Aorta (tissue), 5 donors: ENCODE measurements at regions of chr11 and their contacts with region 1.

Region 1: DNA sequence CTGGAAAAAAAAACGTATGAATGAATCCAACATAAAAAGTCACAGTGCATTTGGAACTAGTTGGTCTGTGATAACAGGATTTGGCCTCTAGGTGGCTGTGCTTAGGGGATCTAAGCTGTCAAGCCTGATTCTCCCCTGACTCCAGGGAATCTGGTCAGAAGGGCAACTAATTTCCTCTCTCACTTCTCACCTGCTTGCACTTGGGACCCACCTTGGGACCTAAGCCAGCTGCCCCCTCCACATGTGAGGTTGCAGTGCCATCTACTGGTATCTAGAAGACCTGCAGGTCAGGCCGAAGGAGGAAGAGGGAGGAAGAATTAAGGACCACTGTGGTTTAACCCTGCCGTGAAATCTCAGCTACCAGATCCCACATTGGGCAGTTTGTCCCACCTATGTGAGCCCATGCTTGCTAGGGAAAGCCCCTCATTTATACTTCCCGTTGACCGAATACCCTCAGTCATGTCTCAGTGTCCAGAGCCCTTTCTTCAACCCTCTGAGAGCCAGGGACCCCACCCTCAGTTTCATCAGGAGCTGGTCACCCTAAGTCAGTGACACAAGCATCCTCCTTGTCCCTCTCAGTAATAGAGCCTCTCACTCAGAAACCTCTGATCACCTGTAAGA is 33.2 kb upstream of the CAVIN3 start:
- DNase-seq: no peak
- ATAC-seq: peak; percentile 81
- H3K4me3 ChIP-seq: no peak overlapping the region
- H3K27ac ChIP-seq: no peak overlapping the region
- H3K4me1 ChIP-seq: no peaks in the 10 kb centered on the region
- H3K27me3 ChIP-seq: no peaks in the 10 kb centered on the region

Region 2: DNA sequence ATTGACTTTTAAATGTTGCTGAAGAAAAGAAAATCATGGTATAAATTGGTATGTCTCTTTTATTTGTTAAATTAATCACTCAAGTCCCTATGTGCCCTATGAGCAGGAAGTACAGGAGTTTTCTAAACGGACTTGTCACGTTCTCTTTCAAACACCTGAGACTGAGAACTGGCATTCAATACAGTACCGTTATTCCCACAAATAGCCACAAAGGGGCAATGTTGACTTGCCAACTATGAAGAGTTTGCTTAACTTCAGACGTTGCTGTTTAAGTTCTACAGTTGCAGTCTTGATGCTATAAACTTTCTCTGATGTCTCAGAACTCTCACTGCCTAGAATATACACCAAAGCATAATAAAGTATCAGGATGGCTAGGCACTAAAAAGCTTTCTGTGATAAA is 330.5 kb before region 1 on chr11:
- intact Hi-C with region 1: loop called in 1 of 2 experiments (anchors 10 kb)
- DNase-seq: no peak
- ATAC-seq: no peak
- H3K4me3 ChIP-seq: no peak overlapping the region
- H3K27ac ChIP-seq: no peak overlapping the region
- H3K4me1 ChIP-seq: no peaks in the 10 kb centered on the region
- H3K27me3 ChIP-seq: no peaks in the 10 kb centered on the region

Region 3: GRCh38 chr11:6251120-6251733 is 102.2 kb before region 1 on chr11:
- intact Hi-C with region 1: loop called (anchors 1 to 2 kb)
- DNase-seq: peak; percentile 72 to 84
- ATAC-seq: peak; percentile 94
- H3K4me3 ChIP-seq: no peak overlapping the region
- H3K27ac ChIP-seq: no peak overlapping the region
- H3K4me1 ChIP-seq: no peaks in the 10 kb centered on the region
- H3K27me3 ChIP-seq: no peaks in the 10 kb centered on the region

Region 4: DNA sequence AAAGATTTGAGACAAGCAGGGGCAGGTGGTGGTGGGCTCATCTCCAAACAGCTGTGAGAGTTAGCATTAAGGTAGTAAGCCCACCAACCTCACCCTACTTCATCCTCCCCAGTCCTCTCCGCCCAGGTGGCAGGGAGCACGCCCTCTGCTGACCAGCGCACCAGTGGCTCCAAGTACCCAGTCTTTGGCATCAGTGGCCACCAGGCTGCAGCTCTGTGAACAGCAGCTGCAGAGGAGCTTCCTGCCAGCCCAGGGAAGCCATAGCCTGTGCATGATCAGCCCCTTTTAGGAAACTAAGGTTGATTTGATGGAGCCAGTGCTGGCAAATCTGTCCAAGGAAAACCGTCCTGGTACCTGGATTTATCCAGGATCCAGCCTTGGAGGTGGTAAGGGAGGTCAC is 54.9 kb before region 1 on chr11:
- intact Hi-C with region 1: loop called (anchors 2 to 5 kb)
- DNase-seq: peak; percentile 53 to 76
- ATAC-seq: peak; percentile 50
- H3K4me3 ChIP-seq: no peak overlapping the region
- H3K27ac ChIP-seq: no peak overlapping the region
- H3K4me1 ChIP-seq: no peaks in the 10 kb centered on the region
- H3K27me3 ChIP-seq: no peaks in the 10 kb centered on the region

Region 5: GRCh38 chr11:6315811-6316425 is 37.6 kb before region 1 on chr11:
- intact Hi-C with region 1: loop called (anchors 1 to 5 kb)
- DNase-seq: peak; percentile 73 to 79
- ATAC-seq: no peak
- H3K4me3 ChIP-seq: no peak overlapping the region
- H3K27ac ChIP-seq: no peak overlapping the region
- H3K4me1 ChIP-seq: no peaks in the 10 kb centered on the region
- H3K27me3 ChIP-seq: no peaks in the 10 kb centered on the region